ENCODE measurements at regions of chr2 and their contacts with region 1.

Region 1: GRCh38 chr2:202577250-202578183 is 57.3 kb upstream of the FAM117B start:
- DNase-seq: no peak

Region 2: DNA sequence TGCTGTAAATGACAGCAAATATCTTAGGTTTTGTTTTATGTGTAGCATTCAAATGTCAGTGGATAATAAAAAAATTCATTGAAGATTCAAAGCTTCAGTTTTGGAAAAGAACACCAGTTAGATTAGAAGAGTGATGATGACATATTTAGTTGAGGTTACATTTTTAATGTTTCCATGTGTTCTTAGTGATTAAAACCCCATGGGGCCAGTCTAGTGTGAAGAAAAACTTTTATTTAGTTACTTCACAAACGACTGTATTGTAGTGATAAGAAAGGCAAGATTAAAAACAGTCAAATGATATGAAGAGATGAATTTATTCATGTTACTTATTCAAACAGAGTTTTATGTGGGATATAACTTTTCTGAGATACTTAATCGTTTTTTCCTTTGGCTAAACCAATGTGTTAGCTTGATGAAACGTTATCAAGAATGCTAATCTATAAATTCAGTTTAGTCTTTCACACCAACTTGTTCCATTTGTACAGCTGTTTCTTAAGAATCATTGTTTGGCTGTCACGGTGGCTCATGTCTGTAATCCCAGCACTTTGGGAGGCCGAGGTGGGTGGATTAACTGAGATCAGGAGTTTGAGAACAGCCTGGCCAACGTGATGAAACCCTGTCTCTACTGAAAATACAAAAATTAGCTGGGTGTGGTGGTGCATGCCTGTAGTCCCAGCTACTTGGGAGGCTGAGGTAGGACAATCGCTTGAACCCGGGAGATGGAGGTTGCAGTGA is 189.7 kb before region 1 on chr2:
- CTCF ChIA-PET with region 1: no interaction called
- POLR2A ChIA-PET with region 1: no interaction called
- DNase-seq: no peak

Region 3: DNA sequence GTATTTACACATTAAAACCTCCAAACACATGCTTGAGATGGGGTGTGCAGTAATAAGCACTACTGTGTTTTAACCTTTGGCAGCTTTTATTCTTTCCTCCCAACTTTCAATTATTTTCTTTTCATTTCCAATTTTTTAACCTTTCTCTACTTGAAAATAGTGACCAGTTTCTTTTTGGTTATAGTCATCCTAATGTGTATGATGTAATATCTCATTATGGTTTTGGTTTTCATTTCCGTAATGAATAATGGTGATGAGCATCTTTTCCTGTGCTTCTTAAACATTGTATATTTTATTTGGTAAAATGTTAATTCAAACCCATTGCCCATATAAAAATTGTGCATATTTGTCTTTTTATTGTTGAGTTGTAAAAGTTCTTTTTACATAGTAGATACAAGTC is 97.9 kb before region 1 on chr2:
- CTCF ChIA-PET with region 1: no interaction called
- POLR2A ChIA-PET with region 1: no interaction called
- DNase-seq: no peak

Region 4: DNA sequence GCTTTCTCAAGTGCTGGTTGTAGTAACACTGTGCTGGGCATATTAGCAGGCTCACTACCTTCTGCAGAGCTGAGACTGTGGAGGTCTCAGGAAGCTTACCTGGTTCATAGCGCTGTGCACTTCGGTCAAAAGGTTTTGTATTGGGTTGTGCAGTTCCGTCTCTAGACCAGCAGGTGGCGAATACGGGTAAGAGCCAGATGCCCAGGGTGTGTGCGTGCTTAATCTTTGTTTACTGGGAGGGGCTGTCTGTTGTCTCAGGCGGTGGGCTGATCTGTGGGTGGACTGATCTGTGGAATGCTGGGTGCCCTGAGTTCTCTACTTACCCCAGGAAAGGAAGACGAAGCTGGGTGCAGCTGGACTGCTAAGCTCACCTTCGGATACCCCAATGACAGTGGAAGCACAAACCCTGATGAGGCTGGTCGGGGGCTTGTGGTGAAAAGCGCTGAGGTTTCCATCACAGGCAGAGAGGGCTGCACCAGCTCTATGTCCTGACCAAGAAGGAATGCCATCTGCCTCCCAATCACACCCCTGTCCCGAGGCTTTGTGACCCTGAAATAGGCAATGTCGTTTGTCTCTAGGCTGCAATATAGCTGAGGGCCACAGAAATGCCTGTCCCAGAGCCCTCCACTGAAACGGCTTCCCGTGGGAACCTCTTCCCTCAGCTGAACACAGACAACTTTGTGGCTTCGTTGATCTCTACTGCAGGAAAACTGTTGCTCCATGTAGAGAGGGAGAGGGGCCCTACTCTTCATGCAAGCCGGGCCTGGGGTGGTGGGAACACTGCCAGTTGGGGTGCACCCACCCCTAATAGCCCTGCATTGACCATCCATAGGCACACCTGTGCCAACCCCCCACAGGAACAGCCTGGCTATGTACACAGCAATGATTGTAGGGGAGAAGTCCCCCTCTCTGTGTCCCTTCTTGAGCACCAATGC is 11.4 kb after region 1 on chr2:
- CTCF ChIA-PET with region 1: interaction called, 10 read pairs
- POLR2A ChIA-PET with region 1: no interaction called
- DNase-seq: peak; percentile 78

Region 5: DNA sequence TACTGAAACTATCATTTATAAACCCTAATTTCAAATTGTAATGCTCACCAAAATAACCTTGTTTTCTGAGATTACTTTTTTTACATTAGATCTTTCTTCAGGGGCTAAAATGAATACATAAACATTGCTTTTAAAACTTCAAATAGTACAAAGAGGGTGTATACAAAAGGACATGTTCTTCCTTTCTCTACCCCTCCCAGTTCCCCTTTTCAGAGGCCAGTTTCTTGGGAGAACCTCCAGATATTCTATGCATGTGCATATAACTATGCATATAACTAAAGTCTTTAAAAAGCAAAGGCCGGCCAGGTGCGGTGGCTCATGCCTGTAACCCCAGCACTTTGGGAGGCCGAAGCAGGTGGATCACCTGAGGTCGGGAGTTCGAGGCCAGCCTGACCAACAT is 46.6 kb after region 1 on chr2:
- CTCF ChIA-PET with region 1: no interaction called
- POLR2A ChIA-PET with region 1: no interaction called
- DNase-seq: no peak